Endothelial cell of umbilical vein (primary cell): ENCODE measurements at regions of chr11 and their contacts with region 1.

Region 1: GRCh38 chr11:129364143-129364654 is 11.4 kb upstream of the BARX2 start:
- DNase-seq: peak; percentile 87
- H3K4me3 ChIP-seq: no peak overlapping the region
- H3K27ac ChIP-seq: no peak overlapping the region
- H3K4me1 ChIP-seq: no peaks in the 10 kb centered on the region
- H3K27me3 ChIP-seq: peaks cover 16 to 47% of the 10 kb centered on the region in 2 experiments
- CTCF ChIP-seq: peak; percentile 99 to 100
- POLR2A ChIP-seq: no peak

Region 2: DNA sequence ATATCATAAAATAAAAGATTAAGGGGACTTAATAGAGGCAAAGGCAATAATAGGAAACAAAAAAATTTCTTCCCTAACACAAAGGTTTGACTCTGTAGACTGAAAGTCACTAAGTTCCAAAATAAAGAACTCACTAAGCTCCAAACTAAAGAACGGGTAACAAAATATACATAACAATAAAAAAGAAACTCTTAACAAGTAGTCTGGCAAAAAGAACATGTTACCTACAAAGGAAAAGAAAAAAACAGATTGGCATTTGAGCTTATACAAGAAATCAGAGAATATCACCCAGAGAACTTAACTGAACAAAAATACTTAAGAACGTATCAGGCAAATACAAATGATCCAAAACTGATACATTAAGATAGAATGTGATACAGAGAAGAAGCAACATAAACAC is 179.6 kb before region 1 on chr11:
- CTCF ChIA-PET with region 1: no interaction called
- POLR2A ChIA-PET with region 1: no interaction called
- dilution Hi-C with region 1: no loop called
- intact Hi-C with region 1: no loop called
- DNase-seq: no peak
- H3K4me3 ChIP-seq: no peak overlapping the region
- H3K27ac ChIP-seq: no peak overlapping the region
- H3K4me1 ChIP-seq: no peaks in the 10 kb centered on the region
- H3K27me3 ChIP-seq: no peaks in the 10 kb centered on the region
- CTCF ChIP-seq: no peak
- POLR2A ChIP-seq: no peak

Region 3: DNA sequence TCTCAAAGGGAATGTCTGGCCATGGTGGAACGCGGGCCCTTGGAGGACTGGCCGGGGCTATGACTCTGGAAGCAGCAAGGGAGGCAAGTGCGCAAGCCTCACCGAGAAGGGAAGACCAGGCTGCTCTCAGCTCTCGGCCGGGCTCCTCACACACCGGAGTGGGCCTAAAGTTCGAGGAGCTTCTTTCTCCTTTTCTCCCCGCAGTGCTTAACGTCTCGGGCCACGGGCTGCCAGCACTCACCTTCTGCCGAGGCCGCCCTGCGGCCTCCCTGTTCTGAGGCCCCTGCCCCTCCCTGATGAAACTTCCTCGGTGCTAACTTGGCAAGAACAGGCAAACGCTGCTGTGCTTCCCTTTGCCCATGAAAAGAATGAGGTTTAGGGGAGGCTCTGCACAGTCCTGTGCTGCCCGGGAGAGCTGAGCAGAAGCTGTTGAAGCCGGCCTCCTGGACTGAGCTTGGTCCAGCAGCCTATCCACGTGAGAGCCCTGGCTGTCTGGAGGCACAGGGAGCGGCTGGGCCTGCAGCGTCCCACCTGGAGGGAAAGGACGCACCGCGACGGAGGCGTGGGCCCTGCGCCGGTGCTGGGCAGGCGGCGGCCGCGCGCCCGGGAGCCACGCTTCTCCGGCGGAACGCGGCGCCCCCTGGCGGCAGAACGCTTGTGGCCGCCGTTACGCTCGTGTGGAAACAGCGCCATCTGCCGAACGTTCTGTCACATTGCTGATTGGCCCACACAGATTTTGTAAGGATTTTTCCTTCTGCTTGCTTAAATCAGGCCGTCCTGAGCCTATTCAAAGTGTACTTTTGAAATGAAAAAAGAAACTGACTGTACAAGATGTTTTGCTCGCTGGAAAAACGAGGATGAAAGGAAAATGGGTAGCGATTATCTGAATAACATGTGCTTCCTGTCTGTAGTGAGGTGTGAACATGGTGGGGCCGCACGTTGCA is 386.4 kb after region 1 on chr11:
- CTCF ChIA-PET with region 1: interaction called, 32 read pairs
- POLR2A ChIA-PET with region 1: no interaction called
- dilution Hi-C with region 1: no loop called
- intact Hi-C with region 1: loop called (anchors 1 kb)
- DNase-seq: peak; percentile 72
- H3K4me3 ChIP-seq: no peak overlapping the region
- H3K27ac ChIP-seq: no peak overlapping the region
- H3K4me1 ChIP-seq: no peaks in the 10 kb centered on the region
- H3K27me3 ChIP-seq: peaks cover 0 to 4% of the 10 kb centered on the region in 2 experiments
- CTCF ChIP-seq: peak; percentile 96 to 98
- POLR2A ChIP-seq: no peak